ENCODE measurements at regions of chr15 and their contacts with region 1.

Region 1: GRCh38 chr15:80480909-80481308 is 76.7 kb downstream of the ARNT2 start:
- DNase-seq: peak; percentile 97
- ATAC-seq: peak; percentile 69
- H3K4me3 ChIP-seq: peak overlapping the region; percentile 8; the same call in 1 of the 2 replicates
- H3K27ac ChIP-seq: peak overlapping the region; percentile 95
- H3K4me1 ChIP-seq: peaks cover 58% of the 10 kb centered on the region
- H3K27me3 ChIP-seq: no peaks in the 10 kb centered on the region
- CTCF ChIP-seq: no peak
- POLR2A ChIP-seq: no peak
- RAD21 ChIP-seq: peak; percentile 12; the same call in 1 of the 2 replicates

Region 2: DNA sequence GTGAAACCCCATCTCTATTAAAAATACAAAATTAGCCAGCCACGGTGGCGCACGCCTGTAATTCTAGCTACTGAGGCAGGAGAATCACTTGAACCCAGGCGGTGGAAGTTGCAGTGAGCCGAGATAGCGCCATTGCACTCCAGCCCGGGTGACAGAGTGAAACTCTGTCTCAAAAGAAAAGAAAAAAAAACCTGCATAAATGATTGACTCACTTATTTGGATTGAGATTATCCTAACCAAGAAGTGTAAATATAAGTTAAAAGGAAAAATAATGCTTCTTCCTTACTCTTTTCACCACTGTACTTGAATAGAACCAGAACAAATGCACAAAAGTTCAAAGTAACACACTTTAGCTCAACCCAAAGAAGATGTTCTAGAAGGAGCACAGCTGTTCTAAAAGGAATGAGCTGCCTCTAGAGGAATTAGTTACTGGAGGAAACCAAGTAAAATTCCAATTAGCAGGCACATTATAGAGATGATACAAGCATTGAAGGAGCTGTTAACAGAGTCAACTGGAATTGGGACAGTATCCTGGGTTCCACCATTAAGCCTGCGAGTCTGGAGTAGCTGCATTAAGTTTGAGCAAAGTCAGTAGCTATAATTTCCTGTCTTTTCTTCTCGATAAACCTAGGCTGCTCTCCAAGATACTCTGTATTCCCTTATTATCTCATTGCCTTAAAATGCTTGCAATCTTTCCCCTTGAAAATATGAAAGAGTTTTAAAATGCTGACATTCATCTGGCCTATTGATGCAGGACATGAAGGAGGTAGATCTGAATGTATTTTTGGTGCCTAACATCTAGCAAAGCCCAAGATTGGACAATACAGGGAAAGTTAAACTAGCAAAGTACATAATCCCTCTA is 593.6 kb before region 1 on chr15:
- CTCF ChIA-PET with region 1: no interaction called
- POLR2A ChIA-PET with region 1: no interaction called
- dilution Hi-C with region 1: no loop called
- in situ Hi-C with region 1: no loop called
- intact Hi-C with region 1: no loop called
- DNase-seq: peak; percentile 40
- ATAC-seq: peak; percentile 72
- H3K4me3 ChIP-seq: no peak overlapping the region
- H3K27ac ChIP-seq: no peak overlapping the region
- H3K4me1 ChIP-seq: peaks cover 2% of the 10 kb centered on the region; the same call in 1 of the 2 replicates
- H3K27me3 ChIP-seq: no peaks in the 10 kb centered on the region
- CTCF ChIP-seq: no peak
- POLR2A ChIP-seq: no peak
- RAD21 ChIP-seq: no peak

Region 3: DNA sequence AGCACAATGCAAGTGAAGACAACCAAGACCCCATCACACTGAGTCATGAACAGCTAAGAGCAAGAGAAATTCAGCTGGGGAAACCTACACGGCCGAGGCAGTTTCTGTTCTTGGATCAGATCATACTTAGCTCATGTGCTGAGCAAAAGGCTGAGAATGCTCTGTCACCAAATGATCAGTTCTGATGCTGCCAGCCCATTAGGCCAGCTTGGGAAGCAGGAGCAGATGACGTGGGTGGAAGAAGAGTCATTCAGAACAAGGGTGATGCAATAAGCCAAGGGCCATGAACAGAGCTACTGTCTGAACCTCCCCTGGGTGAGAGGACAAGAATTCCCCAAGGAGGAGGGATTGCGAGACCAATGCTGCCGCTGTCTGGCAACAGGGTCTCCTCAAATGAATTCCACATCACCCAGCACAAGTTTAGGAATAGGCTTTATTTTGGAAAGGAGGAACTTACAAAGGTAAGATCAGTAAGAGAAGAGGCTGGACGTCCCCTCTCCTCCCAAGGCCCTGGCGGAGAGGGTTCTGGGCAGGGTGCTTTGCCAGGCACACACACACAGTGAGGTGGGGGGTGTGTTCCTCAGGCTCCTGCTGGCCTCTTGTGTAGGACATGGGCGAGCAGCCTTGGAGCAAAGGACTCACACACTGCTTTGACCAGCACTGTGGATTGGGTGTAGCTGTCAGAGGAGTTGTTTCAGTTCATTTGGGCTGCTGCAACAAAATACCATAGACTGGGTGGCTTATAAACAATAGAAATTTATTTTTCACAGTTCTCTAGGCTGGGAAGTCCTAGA is 163.3 kb before region 1 on chr15:
- CTCF ChIA-PET with region 1: no interaction called
- POLR2A ChIA-PET with region 1: no interaction called
- dilution Hi-C with region 1: no loop called
- in situ Hi-C with region 1: no loop called
- intact Hi-C with region 1: no loop called
- DNase-seq: peak; percentile 98
- ATAC-seq: peak; percentile 97
- H3K4me3 ChIP-seq: no peak overlapping the region
- H3K27ac ChIP-seq: no peak overlapping the region
- H3K4me1 ChIP-seq: peaks cover 6% of the 10 kb centered on the region
- H3K27me3 ChIP-seq: no peaks in the 10 kb centered on the region
- CTCF ChIP-seq: no peak
- POLR2A ChIP-seq: no peak
- RAD21 ChIP-seq: no peak

Region 4: GRCh38 chr15:80401456-80401855 is 79.5 kb before region 1 on chr15:
- CTCF ChIA-PET with region 1: no interaction called
- POLR2A ChIA-PET with region 1: no interaction called
- dilution Hi-C with region 1: no loop called
- in situ Hi-C with region 1: no loop called
- intact Hi-C with region 1: no loop called
- DNase-seq: no peak
- ATAC-seq: no peak
- H3K4me3 ChIP-seq: no peak overlapping the region
- H3K27ac ChIP-seq: no peak overlapping the region
- H3K4me1 ChIP-seq: peaks cover 3% of the 10 kb centered on the region; the same call in 1 of the 2 replicates
- H3K27me3 ChIP-seq: peaks cover 5% of the 10 kb centered on the region
- CTCF ChIP-seq: no peak
- POLR2A ChIP-seq: no peak
- RAD21 ChIP-seq: no peak

Region 5: GRCh38 chr15:80414546-80415233 is 66.2 kb before region 1 on chr15:
- CTCF ChIA-PET with region 1: no interaction called
- POLR2A ChIA-PET with region 1: no interaction called
- dilution Hi-C with region 1: no loop called
- in situ Hi-C with region 1: no loop called
- intact Hi-C with region 1: no loop called
- DNase-seq: no peak
- ATAC-seq: no peak
- H3K4me3 ChIP-seq: no peak overlapping the region
- H3K27ac ChIP-seq: no peak overlapping the region
- H3K4me1 ChIP-seq: peaks cover 9% of the 10 kb centered on the region
- H3K27me3 ChIP-seq: no peaks in the 10 kb centered on the region
- CTCF ChIP-seq: no peak
- POLR2A ChIP-seq: no peak
- RAD21 ChIP-seq: no peak

Region 6: GRCh38 chr15:80494351-80494751 is 13.4 kb after region 1 on chr15:
- CTCF ChIA-PET with region 1: interaction called, 4 read pairs
- POLR2A ChIA-PET with region 1: interaction called, 13 read pairs
- dilution Hi-C with region 1: no loop called
- in situ Hi-C with region 1: no loop called
- intact Hi-C with region 1: loop called (anchors 1 kb)
- DNase-seq: peak; percentile 74
- ATAC-seq: peak; percentile 76
- H3K4me3 ChIP-seq: no peak overlapping the region
- H3K27ac ChIP-seq: peak overlapping the region; percentile 99
- H3K4me1 ChIP-seq: peaks cover 45% of the 10 kb centered on the region
- H3K27me3 ChIP-seq: no peaks in the 10 kb centered on the region
- CTCF ChIP-seq: no peak
- POLR2A ChIP-seq: no peak
- RAD21 ChIP-seq: no peak

Region 7: GRCh38 chr15:80507712-80508316 is 26.9 kb after region 1 on chr15:
- CTCF ChIA-PET with region 1: no interaction called
- POLR2A ChIA-PET with region 1: no interaction called
- dilution Hi-C with region 1: no loop called
- in situ Hi-C with region 1: no loop called
- intact Hi-C with region 1: loop called (anchors 2 kb)
- DNase-seq: peak; percentile 96
- ATAC-seq: peak; percentile 82
- H3K4me3 ChIP-seq: no peak overlapping the region
- H3K27ac ChIP-seq: peak overlapping the region; percentile 99
- H3K4me1 ChIP-seq: peaks cover 24% of the 10 kb centered on the region
- H3K27me3 ChIP-seq: no peaks in the 10 kb centered on the region
- CTCF ChIP-seq: no peak
- POLR2A ChIP-seq: no peak
- RAD21 ChIP-seq: no peak

Region 8: GRCh38 chr15:80550219-80550907 is 69.5 kb after region 1 on chr15:
- CTCF ChIA-PET with region 1: no interaction called
- POLR2A ChIA-PET with region 1: no interaction called
- dilution Hi-C with region 1: no loop called
- in situ Hi-C with region 1: no loop called
- intact Hi-C with region 1: loop called (anchors 2 kb)
- DNase-seq: peak; percentile 98
- ATAC-seq: peak; percentile 86
- H3K4me3 ChIP-seq: peak overlapping the region; percentile 4; the same call in 1 of the 2 replicates
- H3K27ac ChIP-seq: peak overlapping the region; percentile 98
- H3K4me1 ChIP-seq: peaks cover 20% of the 10 kb centered on the region
- H3K27me3 ChIP-seq: no peaks in the 10 kb centered on the region
- CTCF ChIP-seq: no peak
- POLR2A ChIP-seq: no peak
- RAD21 ChIP-seq: no peak